Activated CD4-positive, alpha-beta T cell treated with anti-CD3 and anti-CD28 coated beads for 36 hours (primary cell): ENCODE measurements at regions of chr1 and their contacts with region 1.

Region 1: DNA sequence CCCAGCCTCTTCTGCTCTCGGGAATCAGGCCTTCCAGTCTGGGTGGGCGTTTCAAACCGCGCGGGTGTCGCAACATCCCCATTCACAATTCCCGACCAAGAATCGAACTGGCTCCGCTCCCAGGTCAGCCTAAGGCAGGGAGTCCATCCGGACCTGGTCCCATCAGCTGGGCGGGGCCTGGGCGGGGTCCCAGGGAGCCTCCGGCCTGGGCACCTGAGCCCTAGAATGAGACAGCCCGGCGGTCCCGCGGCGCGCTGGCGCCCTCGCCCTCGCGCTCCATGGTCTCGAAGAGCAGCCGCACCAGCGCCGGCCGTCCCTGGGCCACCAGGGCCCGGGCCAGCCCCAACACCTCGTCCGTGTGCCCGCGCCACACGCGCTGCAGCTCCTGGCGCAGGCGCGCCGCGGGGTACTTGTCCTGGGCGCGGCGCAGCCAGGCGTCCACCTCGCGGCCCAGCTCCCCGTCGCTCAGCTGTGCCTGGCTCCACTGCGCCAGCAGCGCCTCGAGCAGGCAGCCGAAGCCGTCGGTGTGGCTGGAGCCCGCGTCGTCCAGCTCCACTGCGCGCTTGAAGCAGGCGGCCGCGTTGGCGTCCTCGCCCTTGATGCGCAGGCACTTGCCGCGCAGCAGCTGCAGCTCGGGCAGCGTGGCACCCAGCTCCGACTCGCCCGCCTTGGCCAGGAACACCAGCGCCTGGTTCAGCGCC is 16.9 kb upstream of the PARS2 start:
- DNase-seq: no peak
- ATAC-seq: no peak
- H3K4me3 Mint-ChIP-seq: no peak overlapping the region
- H3K27ac Mint-ChIP-seq: no peak overlapping the region
- H3K4me1 Mint-ChIP-seq: no peaks in the 10 kb centered on the region
- H3K27me3 Mint-ChIP-seq: no peaks in the 10 kb centered on the region

Region 2: GRCh38 chr1:54791880-54792522 is 10.8 kb after region 1 on chr1:
- CTCF ChIA-PET with region 1: interaction called, 14 read pairs
- POLR2A ChIA-PET with region 1: no interaction called
- intact Hi-C with region 1: no loop called
- DNase-seq: peak; percentile 84
- ATAC-seq: peak; percentile 45
- H3K4me3 Mint-ChIP-seq: no peak overlapping the region
- H3K27ac Mint-ChIP-seq: peak overlapping the region; percentile 22
- H3K4me1 Mint-ChIP-seq: peaks cover 19% of the 10 kb centered on the region
- H3K27me3 Mint-ChIP-seq: no peaks in the 10 kb centered on the region